ENCODE measurements at regions of chr5 and their contacts with region 1.

Region 1: DNA sequence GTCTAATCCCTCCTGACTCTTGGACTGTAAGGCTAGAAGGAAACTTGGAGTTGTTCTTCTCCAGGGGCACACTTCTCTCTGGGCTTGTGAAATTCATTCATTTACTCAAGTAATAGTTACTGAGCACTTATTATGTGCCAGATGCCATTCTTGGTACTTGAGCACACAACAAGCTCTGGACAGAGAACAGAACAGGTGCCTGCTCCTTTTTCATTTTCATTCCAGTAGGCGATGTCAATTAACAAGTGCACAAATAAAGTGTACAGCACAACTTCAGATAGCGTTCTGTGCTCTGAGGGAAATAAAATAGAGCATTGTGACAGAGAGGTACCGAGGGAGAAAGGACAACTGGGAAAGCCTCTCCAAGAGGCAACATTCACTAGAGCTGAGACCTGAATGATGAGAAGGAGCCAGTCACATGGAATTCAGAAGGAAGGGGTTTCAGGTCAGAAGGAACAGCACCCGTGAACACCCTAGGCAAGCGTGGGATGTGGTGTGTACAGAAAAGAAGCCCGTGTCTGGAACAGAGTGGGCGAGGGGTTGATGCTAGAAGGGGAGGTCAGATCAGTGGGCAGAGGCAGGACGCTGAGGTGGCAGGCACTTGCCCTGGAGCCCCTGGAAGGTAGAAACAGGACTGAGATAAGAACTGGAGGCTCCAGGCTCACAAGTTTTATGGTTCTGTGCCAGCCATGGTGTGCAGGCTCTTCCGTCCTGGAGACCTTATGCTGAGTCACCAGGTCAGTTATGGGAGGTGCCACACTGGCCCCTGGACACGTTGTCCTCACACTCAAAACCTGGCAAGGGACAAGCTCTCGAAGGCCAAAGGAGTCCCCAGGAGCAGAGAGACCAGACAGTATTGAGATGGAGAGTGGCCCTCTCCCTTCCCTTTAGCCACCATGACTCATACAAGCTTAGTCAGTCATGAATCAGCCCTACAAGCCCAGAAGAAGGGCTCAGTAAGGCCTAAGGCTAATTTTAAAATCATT is 7.2 kb upstream of the ABLIM3 start:
- DNase-seq: peak; percentile 92
- ATAC-seq: peak; percentile 89
- H3K4me3 ChIP-seq: no peak overlapping the region
- H3K27ac ChIP-seq: peak overlapping the region; percentile 55
- H3K4me1 ChIP-seq: peaks cover 18% of the 10 kb centered on the region
- H3K27me3 ChIP-seq: no peaks in the 10 kb centered on the region
- CTCF ChIP-seq: no peak
- POLR2A ChIP-seq: 0 out of 2 replicates have a peak, but pooled peaks have one; percentile 20
- RAD21 ChIP-seq: no peak

Region 2: GRCh38 chr5:147699496-147700088 is 1434.5 kb before region 1 on chr5:
- CTCF ChIA-PET with region 1: no interaction called
- POLR2A ChIA-PET with region 1: no interaction called
- dilution Hi-C with region 1: no loop called
- in situ Hi-C with region 1: no loop called
- intact Hi-C with region 1: no loop called
- DNase-seq: no peak
- ATAC-seq: no peak
- H3K4me3 ChIP-seq: no peak overlapping the region
- H3K27ac ChIP-seq: no peak overlapping the region
- H3K4me1 ChIP-seq: no peaks in the 10 kb centered on the region
- H3K27me3 ChIP-seq: no peaks in the 10 kb centered on the region
- CTCF ChIP-seq: no peak
- POLR2A ChIP-seq: no peak
- RAD21 ChIP-seq: no peak

Region 3: DNA sequence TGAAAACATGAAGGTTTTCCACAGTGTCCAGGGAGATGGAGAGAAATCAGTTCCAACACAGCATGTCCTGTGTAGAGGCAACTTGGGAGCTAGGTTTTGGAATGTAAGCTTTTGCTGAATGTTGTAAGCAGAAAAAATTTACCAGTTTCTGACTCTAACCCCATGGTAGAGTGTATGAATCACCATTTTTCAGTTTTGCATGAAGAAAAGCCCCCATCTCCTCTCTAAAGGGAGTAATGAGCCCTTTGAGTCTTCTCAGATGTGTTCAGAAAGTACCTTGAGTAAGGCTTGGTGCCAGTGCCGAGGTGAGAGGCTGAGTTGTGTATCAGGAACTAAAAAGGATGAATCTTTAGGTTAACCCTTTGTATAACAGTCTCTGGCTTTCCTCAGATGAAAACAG is 211.5 kb before region 1 on chr5:
- CTCF ChIA-PET with region 1: no interaction called
- POLR2A ChIA-PET with region 1: no interaction called
- dilution Hi-C with region 1: no loop called
- in situ Hi-C with region 1: no loop called
- intact Hi-C with region 1: no loop called
- DNase-seq: peak; percentile 28
- ATAC-seq: peak; percentile 73
- H3K4me3 ChIP-seq: no peak overlapping the region
- H3K27ac ChIP-seq: no peak overlapping the region
- H3K4me1 ChIP-seq: peaks cover 3% of the 10 kb centered on the region
- H3K27me3 ChIP-seq: no peaks in the 10 kb centered on the region
- CTCF ChIP-seq: no peak
- POLR2A ChIP-seq: no peak
- RAD21 ChIP-seq: no peak

Region 4: DNA sequence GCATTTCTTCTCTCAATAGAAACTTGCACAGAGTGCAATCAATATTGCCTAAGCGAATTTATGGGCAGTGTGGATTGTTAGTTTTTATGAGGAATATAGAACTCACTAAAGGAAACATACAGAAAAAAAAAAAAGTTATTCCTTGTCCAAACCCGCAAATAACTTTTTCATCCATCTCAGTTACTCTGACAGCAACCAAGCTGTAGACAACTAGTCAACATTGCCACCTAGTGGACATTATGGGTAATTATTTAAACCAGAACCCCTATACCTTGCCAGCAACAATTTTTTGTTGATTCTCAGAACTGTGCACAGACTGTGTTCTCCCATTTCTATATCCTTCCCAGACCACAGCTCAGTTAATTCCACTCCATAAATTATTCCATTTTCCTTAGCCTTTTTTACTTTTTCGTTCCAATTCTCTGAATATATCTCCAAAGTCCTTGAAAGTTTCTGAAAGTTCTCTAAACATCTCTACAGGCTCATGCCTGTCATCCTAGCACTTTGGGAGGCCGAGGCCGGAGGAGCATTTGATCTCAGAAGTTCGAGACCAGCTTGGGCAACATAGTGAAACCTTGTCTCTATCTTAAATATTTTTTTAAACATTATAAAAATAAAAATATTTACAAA is 135.0 kb after region 1 on chr5:
- CTCF ChIA-PET with region 1: no interaction called
- POLR2A ChIA-PET with region 1: no interaction called
- dilution Hi-C with region 1: no loop called
- in situ Hi-C with region 1: no loop called
- intact Hi-C with region 1: loop called (anchors 5 kb)
- DNase-seq: peak; percentile 61
- ATAC-seq: no peak
- H3K4me3 ChIP-seq: no peak overlapping the region
- H3K27ac ChIP-seq: no peak overlapping the region
- H3K4me1 ChIP-seq: peaks cover 4% of the 10 kb centered on the region
- H3K27me3 ChIP-seq: no peaks in the 10 kb centered on the region
- CTCF ChIP-seq: peak; percentile 72
- POLR2A ChIP-seq: no peak
- RAD21 ChIP-seq: peak; percentile 75

Measured in IMR-90 (cell line).